ENCODE measurements at regions of chr1 and their contacts with region 1.

Region 1: DNA sequence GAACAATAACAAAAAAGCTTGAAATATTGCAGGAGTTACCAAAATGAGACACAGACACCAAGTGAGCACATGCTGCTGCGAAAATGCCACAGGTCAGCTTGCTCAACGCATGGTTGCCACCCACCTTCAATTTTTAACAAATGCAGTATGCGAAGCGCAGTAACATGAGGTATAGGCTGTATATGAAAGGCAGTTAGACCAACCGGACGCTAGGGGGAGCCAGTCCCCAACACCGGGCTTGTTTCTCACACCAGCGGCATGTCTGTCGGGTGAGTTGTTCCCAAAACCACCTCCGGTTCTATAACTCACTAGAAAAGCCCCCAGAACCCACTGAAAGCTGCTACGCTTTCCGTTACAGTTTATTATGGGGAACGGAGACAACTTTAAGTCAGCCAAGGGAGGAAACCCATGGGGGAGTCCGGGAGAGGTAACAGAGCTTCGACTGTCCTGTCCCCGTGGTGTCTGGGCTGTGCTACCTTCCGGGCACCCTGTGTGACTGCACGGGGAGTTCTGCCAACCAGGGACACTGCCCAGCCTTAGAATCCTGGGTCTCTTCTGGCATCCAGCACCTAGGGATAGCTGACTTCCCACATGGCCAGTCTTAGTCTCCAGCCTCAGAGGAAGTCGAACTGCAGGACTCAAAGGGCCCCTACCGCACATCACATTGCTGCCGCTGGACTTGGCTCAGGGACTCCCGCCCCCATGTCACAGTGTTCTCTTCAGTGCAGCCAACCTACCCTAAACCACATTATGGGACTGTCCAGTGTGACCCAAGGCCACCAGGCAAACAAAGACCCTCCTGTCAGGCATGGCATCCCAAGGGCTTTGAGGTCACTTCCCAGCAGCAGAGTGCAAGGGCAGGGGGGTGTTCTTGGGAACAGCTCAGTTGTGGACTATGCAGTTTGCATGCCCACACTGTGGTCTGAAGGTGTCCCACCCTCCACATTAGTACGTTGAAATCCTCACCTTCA is 14.0 kb downstream of the RNF187 start:
- DNase-seq: peak; percentile 70
- H3K4me3 ChIP-seq: no peak overlapping the region
- H3K27ac ChIP-seq: no peak overlapping the region
- H3K27me3 ChIP-seq: peaks cover 5% of the 10 kb centered on the region
- CTCF ChIP-seq: peak; percentile 94

Region 2: DNA sequence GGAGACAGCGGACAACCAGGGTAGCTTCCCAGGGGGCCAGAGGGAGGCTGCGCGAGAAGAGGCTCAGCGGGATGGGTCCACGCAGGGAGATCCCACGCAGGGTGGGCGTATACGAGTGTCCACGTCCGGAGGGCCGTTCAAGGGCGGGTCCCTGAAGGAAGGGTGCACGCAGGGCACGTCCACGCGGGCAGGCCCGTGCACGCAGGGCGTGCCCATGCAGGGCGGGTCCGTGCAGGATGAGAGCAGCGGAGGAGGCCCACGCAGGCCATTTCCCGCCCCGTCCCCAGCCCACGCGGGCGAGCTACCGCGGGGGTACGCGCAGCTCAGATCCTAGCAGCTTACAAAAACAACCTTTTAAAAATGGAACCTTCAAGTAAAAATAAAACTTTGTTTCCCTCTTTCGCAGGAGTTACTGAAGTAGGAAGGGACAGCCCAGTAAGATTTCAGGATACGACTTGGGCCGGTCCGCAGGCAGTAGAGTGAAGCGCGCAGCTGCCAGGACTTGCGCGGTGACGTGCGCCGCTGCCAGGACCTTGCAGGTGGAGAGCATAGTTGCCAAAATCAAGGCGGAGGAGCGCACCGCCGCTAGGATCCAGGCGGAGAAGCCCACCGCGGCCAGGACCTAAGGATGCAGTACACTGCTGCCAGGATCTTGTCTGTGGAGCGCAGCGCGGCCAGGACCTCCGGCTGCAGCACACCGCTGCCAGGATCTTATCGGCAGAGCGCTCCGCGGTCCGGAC is 14.4 kb before region 1 on chr1:
- CTCF ChIA-PET with region 1: interaction called, 24 read pairs
- POLR2A ChIA-PET with region 1: no interaction called
- DNase-seq: peak; percentile 60
- H3K4me3 ChIP-seq: peak overlapping the region; percentile 93
- H3K27ac ChIP-seq: peak overlapping the region; percentile 99
- H3K27me3 ChIP-seq: peaks cover 5% of the 10 kb centered on the region
- CTCF ChIP-seq: no peak

Region 3: GRCh38 chr1:228515200-228515834 is 14.1 kb after region 1 on chr1:
- CTCF ChIA-PET with region 1: interaction called, 23 read pairs
- POLR2A ChIA-PET with region 1: no interaction called
- DNase-seq: peak; percentile 18
- H3K4me3 ChIP-seq: no peak overlapping the region
- H3K27ac ChIP-seq: no peak overlapping the region
- H3K27me3 ChIP-seq: peaks cover 38% of the 10 kb centered on the region
- CTCF ChIP-seq: peak; percentile 75

Measured in AG04450 (cell line).